ENCODE measurements at regions of chr19 and their contacts with region 1.

Region 1: GRCh38 chr19:1383311-1384084 is at the start of gene NDUFS7:
- DNase-seq: peak; percentile 85
- H3K4me3 Mint-ChIP-seq: peak within 1 kb of the TSS; percentile 82
- H3K27ac Mint-ChIP-seq: peak within 1 kb of the TSS; percentile 93
- H3K4me1 Mint-ChIP-seq: peaks cover 6% of the 10 kb centered on the region
- H3K27me3 Mint-ChIP-seq: no peaks in the 10 kb centered on the region
- CTCF ChIP-seq: no peak
- total RNA-seq, gene NDUFS7: 135 and 137 TPM in 2 replicates

Region 2: DNA sequence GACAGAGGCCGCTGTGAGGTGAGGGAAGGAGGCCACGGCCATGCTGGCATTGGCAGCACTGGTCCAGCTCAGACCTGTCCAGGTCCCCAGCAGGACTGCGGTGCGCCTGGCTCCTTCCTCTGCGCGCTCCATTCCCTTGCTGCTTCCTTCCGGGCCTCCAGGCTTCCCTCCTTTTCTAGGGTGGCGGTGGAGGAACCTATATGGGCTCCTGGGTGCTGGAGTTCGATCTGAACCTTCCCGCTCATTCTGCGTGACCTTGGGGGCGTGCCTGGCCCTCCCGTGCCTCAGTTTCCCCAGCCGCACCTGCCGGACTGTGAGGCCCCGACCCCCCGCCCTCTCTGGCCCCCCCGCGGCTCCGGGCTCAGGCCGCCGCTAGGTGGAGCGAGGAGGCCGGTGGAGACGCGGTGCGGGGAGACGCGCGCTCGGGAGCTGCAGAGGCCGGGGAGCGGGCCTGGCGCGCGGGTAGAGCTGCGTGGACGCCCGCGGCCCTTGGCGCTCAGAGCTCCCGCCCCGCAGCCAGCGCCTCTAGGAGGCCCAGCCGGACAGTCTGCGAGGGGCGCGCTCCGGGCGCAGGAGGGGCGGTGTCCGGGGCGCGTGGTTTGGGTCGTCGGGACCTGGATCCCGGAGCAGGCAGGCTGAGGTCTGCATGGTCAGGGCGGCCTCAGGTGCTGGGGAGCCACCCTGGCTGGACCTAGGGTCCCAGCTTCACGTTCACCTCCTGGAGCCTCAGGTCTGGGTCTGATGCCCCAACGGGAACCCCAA is 67.8 kb before region 1 on chr19:
- CTCF ChIA-PET with region 1: interaction called, 3 read pairs
- POLR2A ChIA-PET with region 1: interaction called, 7 read pairs
- intact Hi-C with region 1: loop called (anchors 10 kb)
- DNase-seq: peak; percentile 56
- H3K4me3 Mint-ChIP-seq: no peak overlapping the region
- H3K27ac Mint-ChIP-seq: peak overlapping the region; percentile 59
- H3K4me1 Mint-ChIP-seq: no peaks in the 10 kb centered on the region
- H3K27me3 Mint-ChIP-seq: no peaks in the 10 kb centered on the region
- CTCF ChIP-seq: peak; percentile 83

Region 3: DNA sequence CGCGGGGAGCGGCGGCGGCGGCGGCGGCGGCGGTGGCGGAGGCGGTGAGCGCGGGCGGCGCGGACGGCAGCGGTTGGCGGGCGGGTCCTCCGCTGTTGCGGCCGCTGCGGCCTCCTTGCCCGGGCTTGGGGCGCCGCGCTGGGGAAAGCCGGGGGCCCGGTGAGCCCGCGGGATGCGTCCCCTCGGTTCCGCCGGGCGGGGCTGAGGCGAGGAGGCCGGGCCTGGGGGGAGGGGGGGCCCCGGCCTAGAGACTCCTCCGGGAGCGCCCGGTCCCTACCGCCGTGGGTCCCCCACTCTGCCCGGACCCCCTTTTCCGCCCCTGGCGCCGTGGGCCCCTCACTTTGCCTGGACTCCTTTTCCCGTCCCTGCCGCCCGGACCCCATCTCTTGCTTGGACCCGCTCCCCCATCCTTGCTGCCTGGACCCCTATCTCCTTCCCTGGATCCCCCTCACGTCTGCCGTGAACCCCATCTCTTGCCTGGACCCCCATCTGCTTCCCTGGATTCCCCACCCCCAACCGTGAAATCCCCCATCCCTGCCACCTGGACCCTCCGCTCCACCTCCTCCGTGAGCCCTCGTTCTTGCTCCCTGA is 28.4 kb before region 1 on chr19:
- CTCF ChIA-PET with region 1: no interaction called
- POLR2A ChIA-PET with region 1: interaction called, 11 read pairs
- intact Hi-C with region 1: no loop called
- DNase-seq: no peak
- H3K4me3 Mint-ChIP-seq: peak overlapping the region; percentile 79
- H3K27ac Mint-ChIP-seq: peak overlapping the region; percentile 71
- H3K4me1 Mint-ChIP-seq: peaks cover 8% of the 10 kb centered on the region
- H3K27me3 Mint-ChIP-seq: no peaks in the 10 kb centered on the region
- CTCF ChIP-seq: no peak

Region 4: DNA sequence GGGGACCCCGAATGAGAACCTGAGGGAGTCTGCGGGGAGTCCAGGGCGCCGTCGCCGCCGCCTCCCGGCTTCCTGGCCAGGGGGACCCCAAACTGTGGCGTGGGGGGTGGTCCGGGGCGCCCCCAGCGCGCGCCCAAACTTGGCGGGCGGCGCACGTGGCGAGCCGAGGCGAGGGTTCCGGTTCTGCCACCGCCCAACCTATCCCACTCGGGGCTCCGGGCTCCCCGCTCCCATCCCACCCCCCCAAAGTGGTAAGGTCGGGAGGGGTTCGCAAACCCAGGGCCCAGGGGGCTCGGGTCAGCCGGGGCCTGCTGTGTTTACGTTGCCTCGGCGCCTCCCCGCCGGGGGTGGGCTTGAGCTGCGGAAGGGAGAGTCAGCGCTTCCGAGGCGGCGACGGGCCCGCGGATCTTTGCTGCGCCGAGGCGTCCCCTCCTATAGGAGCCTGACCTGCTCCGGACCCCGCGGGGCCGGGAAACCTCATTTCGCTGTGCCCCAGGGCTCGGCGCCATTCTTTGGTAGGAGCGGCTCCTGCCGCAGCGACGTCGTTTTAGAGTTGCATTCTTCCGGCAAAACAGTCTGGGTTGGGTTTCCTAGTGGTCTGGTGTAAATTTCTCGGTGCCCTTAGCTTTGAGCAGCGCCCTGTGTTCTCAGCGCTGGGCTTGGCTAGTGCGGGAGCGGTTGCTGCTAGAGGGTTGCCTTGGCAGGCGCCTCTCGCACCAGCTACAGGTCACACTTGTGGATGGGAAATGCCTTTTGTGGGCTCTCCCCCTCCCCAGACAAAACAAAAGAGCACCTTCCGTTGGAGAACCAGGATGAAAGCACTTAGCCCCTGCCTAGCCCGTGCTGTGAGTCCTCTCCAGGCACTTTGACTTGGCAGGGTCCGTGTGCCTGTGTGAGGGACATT is 25.1 kb after region 1 on chr19:
- CTCF ChIA-PET with region 1: interaction called, 7 read pairs
- POLR2A ChIA-PET with region 1: interaction called, 10 read pairs
- intact Hi-C with region 1: no loop called
- DNase-seq: peak; percentile 35
- H3K4me3 Mint-ChIP-seq: peak overlapping the region; percentile 88
- H3K27ac Mint-ChIP-seq: peak overlapping the region; percentile 85
- H3K4me1 Mint-ChIP-seq: peaks cover 24% of the 10 kb centered on the region
- H3K27me3 Mint-ChIP-seq: no peaks in the 10 kb centered on the region
- CTCF ChIP-seq: no peak

Region 5: DNA sequence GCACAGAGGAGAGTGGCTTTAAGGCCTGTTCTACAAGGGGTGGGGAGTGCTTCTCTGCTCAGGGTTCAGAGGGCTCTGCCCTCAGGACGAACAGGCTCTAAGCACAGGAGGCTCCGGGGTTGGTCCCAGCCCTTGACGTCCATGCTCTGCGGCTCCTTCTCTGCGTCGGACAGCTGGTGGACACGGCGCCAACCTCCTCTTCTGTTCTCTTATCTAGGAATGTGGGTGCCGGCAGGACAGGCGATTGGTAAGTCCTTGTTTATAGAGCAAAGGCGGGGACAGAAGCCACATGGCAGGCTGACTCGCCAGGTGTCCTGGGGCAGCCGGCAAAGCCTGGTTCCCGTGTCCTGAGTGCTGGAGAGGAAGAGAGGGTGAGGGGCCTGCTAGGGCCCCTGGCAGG is 46.3 kb after region 1 on chr19:
- CTCF ChIA-PET with region 1: no interaction called
- POLR2A ChIA-PET with region 1: no interaction called
- intact Hi-C with region 1: no loop called
- DNase-seq: no peak
- H3K4me3 Mint-ChIP-seq: no peak overlapping the region
- H3K27ac Mint-ChIP-seq: no peak overlapping the region
- H3K4me1 Mint-ChIP-seq: no peaks in the 10 kb centered on the region
- H3K27me3 Mint-ChIP-seq: no peaks in the 10 kb centered on the region
- CTCF ChIP-seq: no peak